Mammary epithelial cell (primary cell): ENCODE measurements at regions of chr14 and their contacts with region 1.

Region 1: DNA sequence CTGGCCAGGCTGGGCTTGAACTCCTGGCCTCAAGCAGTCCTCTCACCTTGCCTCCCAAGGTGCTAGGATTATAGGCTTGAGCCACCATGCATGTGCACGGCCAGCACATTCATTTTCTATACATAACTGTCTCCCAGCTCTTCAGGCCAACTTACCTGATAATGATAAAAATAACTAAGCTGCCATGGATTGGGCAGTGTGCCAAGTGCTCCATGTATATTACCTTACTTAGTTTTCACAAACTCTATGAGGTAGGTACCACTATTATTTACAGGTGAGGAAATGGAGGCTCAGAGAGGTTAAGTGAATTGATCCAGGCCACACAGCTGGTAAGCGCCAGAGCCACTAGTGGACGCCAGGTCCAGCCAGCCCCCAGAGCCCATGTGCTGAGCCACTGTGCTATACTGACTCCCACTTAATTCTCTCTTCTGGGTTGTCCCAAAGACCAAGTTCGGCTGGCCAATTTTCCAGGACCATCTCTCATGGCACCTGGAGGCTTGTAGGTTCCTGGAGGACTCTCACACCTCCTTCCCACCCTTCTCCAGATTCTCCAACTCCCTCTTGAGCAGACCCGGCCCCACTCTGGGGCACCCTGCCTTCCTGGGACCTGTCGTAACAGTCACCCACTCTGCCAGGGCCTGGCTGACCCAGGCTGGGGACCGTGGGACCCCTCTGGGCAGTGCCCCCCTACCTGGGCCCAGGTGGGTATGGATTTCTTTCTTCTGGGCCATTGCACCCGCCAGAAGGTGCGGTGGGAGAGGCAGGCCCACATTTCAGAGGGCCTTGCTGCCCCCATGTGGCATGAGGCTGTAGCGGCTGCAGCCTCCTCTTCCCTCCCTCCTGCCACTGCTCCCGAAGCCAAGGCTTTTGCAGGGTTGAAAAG is 30.2 kb upstream of the CIPC start:
- DNase-seq: peak; percentile 54
- H3K4me3 ChIP-seq: no peak overlapping the region
- H3K27ac ChIP-seq: no peak overlapping the region
- H3K4me1 ChIP-seq: peaks cover 16% of the 10 kb centered on the region
- H3K27me3 ChIP-seq: no peaks in the 10 kb centered on the region
- CTCF ChIP-seq: peak; percentile 93 to 97

Region 2: GRCh38 chr14:76882651-76883050 is 185.2 kb before region 1 on chr14:
- CTCF ChIA-PET with region 1: no interaction called
- dilution Hi-C with region 1: no loop called
- in situ Hi-C with region 1: loop called (anchors 5 to 10 kb)
- intact Hi-C with region 1: no loop called
- DNase-seq: no peak
- H3K4me3 ChIP-seq: no peak overlapping the region
- H3K27ac ChIP-seq: no peak overlapping the region
- H3K4me1 ChIP-seq: no peaks in the 10 kb centered on the region
- H3K27me3 ChIP-seq: no peaks in the 10 kb centered on the region
- CTCF ChIP-seq: no peak

Region 3: DNA sequence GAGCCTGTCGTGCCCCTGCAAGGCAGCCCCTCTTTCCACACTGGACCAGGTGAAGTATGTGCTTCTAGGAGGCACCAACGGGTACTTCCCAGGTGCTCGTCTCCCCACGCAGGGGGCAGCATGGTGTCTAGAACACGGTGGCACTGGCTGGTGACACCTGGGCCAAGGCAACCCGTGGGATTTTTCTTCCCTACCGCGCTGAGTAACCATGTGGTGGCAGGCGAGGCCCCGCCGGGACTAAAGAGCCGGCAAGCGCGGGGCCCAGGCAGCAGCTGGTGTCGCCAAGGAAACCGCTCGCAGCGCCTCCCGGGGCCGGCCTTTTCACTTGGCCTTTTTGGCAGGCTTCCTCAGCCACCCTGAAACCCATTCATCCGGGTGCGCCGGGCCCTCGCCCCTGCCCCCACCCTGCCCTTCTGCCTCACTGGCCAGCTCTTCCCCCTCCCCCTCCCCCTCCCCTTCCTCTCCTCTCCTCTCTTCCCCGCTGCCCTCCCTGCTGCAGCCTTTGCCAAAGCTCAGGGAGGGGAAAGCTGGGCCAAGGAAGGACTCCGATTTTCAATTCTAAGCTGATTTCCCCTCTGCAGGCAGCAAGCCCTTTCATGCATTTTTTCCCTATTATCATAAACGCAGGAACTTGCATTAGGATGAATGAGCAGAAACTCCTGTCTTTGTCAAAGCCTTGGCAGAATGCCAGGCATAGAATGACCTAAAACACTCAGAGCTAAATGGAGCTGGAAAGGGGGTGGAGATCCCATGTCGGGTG is 120.6 kb before region 1 on chr14:
- CTCF ChIA-PET with region 1: no interaction called
- dilution Hi-C with region 1: no loop called
- in situ Hi-C with region 1: no loop called
- intact Hi-C with region 1: loop called (anchors 1 kb)
- DNase-seq: peak; percentile 83
- H3K4me3 ChIP-seq: no peak overlapping the region
- H3K27ac ChIP-seq: peak overlapping the region; percentile 58
- H3K4me1 ChIP-seq: peaks cover 45% of the 10 kb centered on the region
- H3K27me3 ChIP-seq: no peaks in the 10 kb centered on the region
- CTCF ChIP-seq: peak; percentile 16 to 74

Region 4: GRCh38 chr14:77028384-77029231 is 39.3 kb before region 1 on chr14 and contains the start of gene IRF2BPL:
- CTCF ChIA-PET with region 1: no interaction called
- dilution Hi-C with region 1: no loop called
- in situ Hi-C with region 1: no loop called
- intact Hi-C with region 1: loop called (anchors 1 kb)
- DNase-seq: peak; percentile 96
- H3K4me3 ChIP-seq: peak within 1 kb of the TSS; percentile 56 to 88 (median 79)
- H3K27ac ChIP-seq: peak within 1 kb of the TSS; percentile 81
- H3K4me1 ChIP-seq: peaks cover 48% of the 10 kb centered on the region
- H3K27me3 ChIP-seq: no peaks in the 10 kb centered on the region
- CTCF ChIP-seq: no peak
- total RNA-seq, gene IRF2BPL: 41.3 to 49.4 TPM